Mucosa of descending colon (tissue), 3 donors: ENCODE measurements at regions of chr4 and their contacts with region 1.

Region 1: GRCh38 chr4:73245955-73246354 is 12.6 kb downstream of the ANKRD17 start:
- DNase-seq: no peak
- ATAC-seq: no peak
- H3K4me3 ChIP-seq: no peak overlapping the region
- H3K4me1 ChIP-seq: peaks cover 11% of the 10 kb centered on the region
- CTCF ChIP-seq: no peak

Region 2: GRCh38 chr4:73069338-73070073 is 176.4 kb before region 1 on chr4 and contains the start of gene COX18:
- intact Hi-C with region 1: loop called in 1 of 2 experiments (anchors 10 kb)
- DNase-seq: peak; percentile 98 to 99 (median 99)
- ATAC-seq: peak; percentile 90
- H3K4me3 ChIP-seq: peak within 1 kb of the TSS; percentile 35
- H3K4me1 ChIP-seq: peaks cover 8% of the 10 kb centered on the region
- CTCF ChIP-seq: peak; percentile 8
- total RNA-seq, gene COX18: 12.2 to 17.8 (median 14.2) TPM

Region 3: DNA sequence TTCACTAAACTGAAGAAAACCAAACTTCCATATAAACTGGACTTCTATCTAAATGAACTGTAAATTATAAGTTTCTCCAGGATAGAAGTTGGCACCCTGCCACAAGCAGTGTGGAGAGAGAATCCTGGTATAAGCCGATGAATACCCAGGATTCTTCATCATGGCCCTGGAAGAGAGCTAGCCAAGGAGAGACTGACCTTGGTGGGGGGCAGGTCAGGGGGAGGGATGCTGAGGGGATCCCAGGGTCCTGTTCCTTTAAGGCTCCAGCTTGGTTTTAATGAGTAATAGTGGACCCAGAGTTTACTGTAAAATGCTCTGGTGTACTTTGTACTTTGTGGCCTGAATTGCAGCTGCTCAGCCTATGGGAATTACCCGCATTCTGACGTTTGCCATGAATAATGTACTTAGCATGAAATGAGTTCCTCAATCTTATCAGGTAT is 357.3 kb after region 1 on chr4:
- intact Hi-C with region 1: no loop called
- DNase-seq: peak in 2 of 3 donors; percentile 52 to 79
- ATAC-seq: peak; percentile 74
- H3K4me3 ChIP-seq: no peak overlapping the region
- H3K4me1 ChIP-seq: peaks cover 38% of the 10 kb centered on the region
- CTCF ChIP-seq: no peak